ENCODE measurements at regions of chr22 and their contacts with region 1.

Region 1: GRCh38 chr22:37077884-37078485 is 26.4 kb downstream of the KCTD17 start:
- DNase-seq: peak; percentile 47 to 90 (median 79)
- ATAC-seq: peak in 3 of 4 experiments; percentile 21 to 57 (median 37)
- H3K4me3 ChIP-seq: no peak overlapping the region
- H3K4me3 Mint-ChIP-seq: peak overlapping the region in 2 of 3 donors; percentile 18 to 70
- H3K27ac ChIP-seq: peak overlapping the region; percentile 67
- H3K27ac Mint-ChIP-seq: peak overlapping the region; percentile 89 to 96
- H3K4me1 ChIP-seq: peaks cover 19 to 48% of the 10 kb centered on the region in 2 experiments
- H3K4me1 Mint-ChIP-seq: peaks cover 37 to 50% (median 50%) of the 10 kb centered on the region in 3 donors
- H3K27me3 ChIP-seq: peaks cover 0 to 26% of the 10 kb centered on the region in 2 experiments
- H3K27me3 Mint-ChIP-seq: peaks cover 3 to 10% of the 10 kb centered on the region in 2 donors

Region 2: DNA sequence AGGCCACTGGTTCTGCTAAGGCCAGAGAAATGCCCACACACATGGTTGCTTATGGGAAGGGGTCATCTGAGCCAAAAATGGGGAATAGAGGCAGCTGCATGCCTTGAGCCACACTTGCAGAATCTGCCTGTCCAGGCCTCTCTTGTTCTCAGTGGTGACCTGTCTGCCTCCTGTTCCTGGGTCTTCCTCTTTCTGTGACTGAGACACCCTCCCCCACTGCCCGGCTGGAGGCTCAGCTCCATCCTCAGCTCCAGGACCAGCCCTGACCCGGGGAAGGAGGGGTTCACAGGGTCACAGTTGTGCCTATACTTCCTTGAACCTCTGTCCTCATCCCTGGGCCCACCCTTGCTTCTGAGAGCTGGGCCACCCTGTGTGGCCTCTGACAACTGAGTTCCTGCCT is 112.3 kb before region 1 on chr22:
- CTCF ChIA-PET with region 1: no interaction called
- POLR2A ChIA-PET with region 1: no interaction called
- DNase-seq: no peak
- ATAC-seq: no peak
- H3K4me3 ChIP-seq: no peak overlapping the region
- H3K4me3 Mint-ChIP-seq: no peak overlapping the region
- H3K27ac ChIP-seq: no peak overlapping the region
- H3K27ac Mint-ChIP-seq: no peak overlapping the region
- H3K4me1 ChIP-seq: no peaks in the 10 kb centered on the region
- H3K4me1 Mint-ChIP-seq: no peaks in the 10 kb centered on the region
- H3K27me3 ChIP-seq: peaks cover 0 to 4% of the 10 kb centered on the region in 2 experiments
- H3K27me3 Mint-ChIP-seq: peaks cover 11 to 12% of the 10 kb centered on the region in 2 donors

Region 3: DNA sequence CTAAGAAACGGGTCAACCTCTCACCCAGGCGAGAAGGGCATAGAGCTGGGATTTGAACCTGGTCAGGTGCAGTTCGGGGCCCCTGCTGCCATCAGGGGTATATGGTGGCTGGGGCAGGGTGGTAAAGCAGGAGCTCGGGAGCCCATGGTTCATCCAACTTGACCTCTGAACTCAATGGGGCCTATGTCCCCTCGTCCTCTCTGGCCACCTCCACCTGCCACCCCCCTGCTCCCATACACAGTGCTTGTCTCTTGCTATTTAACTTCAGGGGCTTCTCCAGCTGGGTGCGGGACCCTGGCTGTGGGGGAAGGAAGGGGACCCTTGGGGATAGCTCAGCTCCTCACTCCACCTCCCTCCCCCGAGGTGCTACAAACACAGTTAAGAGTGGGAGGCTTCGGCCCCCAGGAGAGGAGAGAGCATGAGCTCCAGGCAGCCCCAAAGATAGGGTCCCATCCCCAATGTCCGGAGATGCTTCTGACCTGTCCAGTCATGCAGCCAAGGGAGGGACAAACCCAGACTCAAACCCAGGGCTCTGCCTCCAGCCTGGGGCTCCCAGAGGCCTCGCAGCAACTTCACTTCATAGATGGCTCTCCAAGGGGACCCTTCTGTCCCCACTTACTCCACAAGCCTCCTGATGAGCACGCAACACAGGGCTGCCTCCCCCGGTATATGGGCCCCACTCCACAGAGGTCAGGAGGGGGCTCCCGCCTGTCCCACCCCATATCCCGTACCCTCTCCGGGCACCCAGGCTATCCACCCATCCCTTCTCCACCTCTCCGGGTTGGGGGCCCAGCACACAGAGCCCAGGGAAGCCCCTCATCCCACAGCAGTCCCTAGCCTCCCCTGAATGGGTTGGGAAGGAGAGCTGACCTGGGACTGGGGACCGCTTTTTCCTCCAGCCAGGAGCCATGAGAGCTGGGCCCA is 71.0 kb after region 1 on chr22:
- CTCF ChIA-PET with region 1: interaction called in 1 of 2 experiments, 32 read pairs
- POLR2A ChIA-PET with region 1: interaction called, 3 to 8 read pairs
- DNase-seq: peak in 1 of 35 experiments; percentile 20
- ATAC-seq: peak in 2 of 4 experiments; percentile 12 to 18
- H3K4me3 ChIP-seq: peak overlapping the region; percentile 56 to 96
- H3K4me3 Mint-ChIP-seq: peak overlapping the region; percentile 75 to 93 (median 87)
- H3K27ac ChIP-seq: peak overlapping the region; percentile 94
- H3K27ac Mint-ChIP-seq: peak overlapping the region; percentile 96 to 98
- H3K4me1 ChIP-seq: peaks cover 11 to 58% of the 10 kb centered on the region in 2 experiments
- H3K4me1 Mint-ChIP-seq: peaks cover 65 to 73% (median 72%) of the 10 kb centered on the region in 3 donors
- H3K27me3 ChIP-seq: no peaks in the 10 kb centered on the region
- H3K27me3 Mint-ChIP-seq: no peaks in the 10 kb centered on the region

Region 4: GRCh38 chr22:37166675-37167066 is 88.7 kb after region 1 on chr22:
- CTCF ChIA-PET with region 1: interaction called in 1 of 2 experiments, 11 read pairs
- POLR2A ChIA-PET with region 1: no interaction called
- DNase-seq: peak; percentile 54 to 92 (median 78)
- ATAC-seq: peak; percentile 60 to 76 (median 68)
- H3K4me3 ChIP-seq: peak overlapping the region in 1 of 2 donors; percentile 31
- H3K4me3 Mint-ChIP-seq: peak overlapping the region; percentile 74 to 85 (median 82)
- H3K27ac ChIP-seq: peak overlapping the region; percentile 45
- H3K27ac Mint-ChIP-seq: peak overlapping the region; percentile 96 to 97
- H3K4me1 ChIP-seq: peaks cover 20 to 94% of the 10 kb centered on the region in 2 experiments
- H3K4me1 Mint-ChIP-seq: peaks cover 84 to 97% (median 94%) of the 10 kb centered on the region in 3 donors
- H3K27me3 ChIP-seq: no peaks in the 10 kb centered on the region
- H3K27me3 Mint-ChIP-seq: no peaks in the 10 kb centered on the region

Region 5: DNA sequence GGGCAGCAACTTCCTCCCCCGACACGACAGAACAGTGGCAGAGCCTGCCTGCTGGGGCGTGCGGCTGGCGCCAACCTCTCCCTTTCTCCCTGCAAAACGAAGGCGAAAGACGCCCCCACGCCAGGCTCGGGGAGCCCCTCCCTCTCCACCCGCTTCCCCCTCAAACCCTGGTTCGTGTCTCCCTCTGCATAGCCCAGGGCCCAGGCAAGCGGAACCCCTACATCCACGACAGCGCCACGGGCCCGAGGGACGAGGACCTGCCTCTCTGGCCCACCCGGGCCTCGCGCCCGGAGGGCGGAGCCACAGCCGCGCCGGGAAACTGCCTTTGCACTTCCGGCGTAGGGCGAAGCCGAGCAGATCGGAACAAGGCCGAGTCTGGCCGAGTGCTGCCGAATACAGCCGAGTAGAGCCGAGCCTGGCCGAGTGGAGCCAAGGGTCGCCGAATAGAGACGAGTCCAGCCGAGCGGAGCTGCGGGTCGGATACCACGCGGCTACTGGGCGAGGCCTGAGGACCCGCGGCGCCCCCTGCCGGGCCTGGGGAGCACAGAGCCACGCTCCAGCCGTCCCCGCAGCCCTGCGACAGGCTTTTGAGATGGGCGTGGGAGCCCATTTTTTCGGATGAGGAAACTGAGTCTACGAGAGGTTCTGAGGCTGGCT is 121.2 kb after region 1 on chr22:
- CTCF ChIA-PET with region 1: interaction called in 1 of 2 experiments, 24 read pairs
- POLR2A ChIA-PET with region 1: no interaction called
- DNase-seq: peak; percentile 90 to 100 (median 97)
- ATAC-seq: peak; percentile 93 to 97 (median 95)
- H3K4me3 ChIP-seq: peak overlapping the region; percentile 55 to 78
- H3K4me3 Mint-ChIP-seq: peak overlapping the region; percentile 81 to 86 (median 84)
- H3K27ac ChIP-seq: peak overlapping the region; percentile 94
- H3K27ac Mint-ChIP-seq: peak overlapping the region; percentile 97 to 98
- H3K4me1 ChIP-seq: peaks cover 15 to 54% of the 10 kb centered on the region in 2 experiments
- H3K4me1 Mint-ChIP-seq: peaks cover 37 to 56% (median 47%) of the 10 kb centered on the region in 3 donors
- H3K27me3 ChIP-seq: no peaks in the 10 kb centered on the region
- H3K27me3 Mint-ChIP-seq: no peaks in the 10 kb centered on the region

Measured in T-cell (primary cell).